WTC11 (cell line): ENCODE measurements at regions of chr11 and their contacts with region 1.

Region 1: GRCh38 chr11:120696597-120697218 is 185.2 kb downstream of the GRIK4 start:
- DNase-seq: peak; percentile 69
- ATAC-seq: peak; percentile 81
- H3K4me3 Mint-ChIP-seq: no peak overlapping the region
- H3K27ac Mint-ChIP-seq: no peak overlapping the region; the same call in 1 of the 2 replicates
- H3K4me1 Mint-ChIP-seq: peaks cover 5% of the 10 kb centered on the region
- H3K27me3 Mint-ChIP-seq: no peaks in the 10 kb centered on the region
- CTCF ChIP-seq: peak; percentile 33; the same call in 1 of the 2 replicates

Region 2: GRCh38 chr11:120511116-120511819 is 185.4 kb before region 1 on chr11 and contains the start of gene GRIK4:
- CTCF ChIA-PET with region 1: interaction called, 10 read pairs
- POLR2A ChIA-PET with region 1: no interaction called
- DNase-seq: peak; percentile 92
- ATAC-seq: peak; percentile 87
- H3K4me3 Mint-ChIP-seq: peak within 1 kb of the TSS; percentile 61
- H3K27ac Mint-ChIP-seq: no peak within 1 kb of the TSS
- H3K4me1 Mint-ChIP-seq: peaks cover 11% of the 10 kb centered on the region
- H3K27me3 Mint-ChIP-seq: peaks cover 25% of the 10 kb centered on the region
- CTCF ChIP-seq: peak; percentile 92
- total RNA-seq, gene GRIK4: 2.9 to 3.6 TPM (median 3.3 TPM) in 3 replicates

Region 3: GRCh38 chr11:120579611-120580031 is 117.1 kb before region 1 on chr11:
- CTCF ChIA-PET with region 1: no interaction called
- POLR2A ChIA-PET with region 1: no interaction called
- DNase-seq: no peak
- ATAC-seq: no peak
- H3K4me3 Mint-ChIP-seq: no peak overlapping the region
- H3K27ac Mint-ChIP-seq: no peak overlapping the region
- H3K4me1 Mint-ChIP-seq: peaks cover 31% of the 10 kb centered on the region
- H3K27me3 Mint-ChIP-seq: peaks cover 6% of the 10 kb centered on the region; the same call in 1 of the 2 replicates
- CTCF ChIP-seq: no peak

Region 4: GRCh38 chr11:120660024-120660565 is 36.6 kb before region 1 on chr11:
- CTCF ChIA-PET with region 1: interaction called, 17 read pairs
- POLR2A ChIA-PET with region 1: no interaction called
- DNase-seq: peak; percentile 84
- ATAC-seq: peak; percentile 84
- H3K4me3 Mint-ChIP-seq: no peak overlapping the region
- H3K27ac Mint-ChIP-seq: no peak overlapping the region
- H3K4me1 Mint-ChIP-seq: peaks cover 40% of the 10 kb centered on the region
- H3K27me3 Mint-ChIP-seq: peaks cover 10% of the 10 kb centered on the region
- CTCF ChIP-seq: peak; percentile 67

Region 5: GRCh38 chr11:120710354-120711131 is 13.8 kb after region 1 on chr11:
- CTCF ChIA-PET with region 1: interaction called, 34 read pairs
- POLR2A ChIA-PET with region 1: no interaction called
- DNase-seq: peak; percentile 60
- ATAC-seq: peak; percentile 76
- H3K4me3 Mint-ChIP-seq: no peak overlapping the region
- H3K27ac Mint-ChIP-seq: no peak overlapping the region; the same call in 1 of the 2 replicates
- H3K4me1 Mint-ChIP-seq: peaks cover 38% of the 10 kb centered on the region
- H3K27me3 Mint-ChIP-seq: no peaks in the 10 kb centered on the region; the same call in 1 of the 2 replicates
- CTCF ChIP-seq: no peak

Region 6: DNA sequence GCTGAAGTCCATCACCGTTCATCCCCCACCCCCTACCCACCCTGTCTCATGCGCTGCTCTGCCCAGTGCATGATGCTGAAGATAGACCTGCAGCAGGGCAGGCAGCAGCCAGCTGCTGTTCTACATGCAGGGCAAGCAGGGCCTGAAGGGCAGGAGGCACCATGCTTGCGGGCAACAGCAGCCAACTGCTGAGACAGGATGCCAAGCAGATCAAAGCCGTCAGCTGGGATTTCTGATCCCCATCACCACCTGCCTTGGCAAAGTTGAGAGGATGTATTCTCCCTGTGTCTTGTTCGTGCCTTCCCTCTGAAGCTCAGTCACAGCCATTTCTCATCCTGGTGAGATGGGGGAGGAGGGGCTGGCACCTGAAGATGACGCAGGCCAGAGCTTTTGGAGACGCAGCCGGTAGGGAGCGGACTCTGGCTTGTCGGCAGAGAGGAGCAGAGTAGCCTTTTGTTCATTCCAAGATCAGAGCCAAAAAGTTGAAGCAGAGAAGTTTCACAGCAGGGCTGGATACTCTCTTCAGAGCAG is 41.9 kb after region 1 on chr11:
- CTCF ChIA-PET with region 1: interaction called, 13 read pairs
- POLR2A ChIA-PET with region 1: no interaction called
- DNase-seq: no peak
- ATAC-seq: no peak
- H3K4me3 Mint-ChIP-seq: no peak overlapping the region
- H3K27ac Mint-ChIP-seq: no peak overlapping the region; the same call in 1 of the 2 replicates
- H3K4me1 Mint-ChIP-seq: no peaks in the 10 kb centered on the region
- H3K27me3 Mint-ChIP-seq: no peaks in the 10 kb centered on the region
- CTCF ChIP-seq: no peak